Gastrocnemius medialis (tissue), 4 donors: ENCODE measurements at regions of chr12 and their contacts with region 1.

Region 1: GRCh38 chr12:123457980-123458783 is at the start of gene SNRNP35:
- DNase-seq: peak; percentile 48 to 71
- ATAC-seq: peak; percentile 86
- H3K4me3 ChIP-seq: peak within 1 kb of the TSS; percentile 63 to 98 (median 89)
- H3K27ac ChIP-seq: peak within 1 kb of the TSS; percentile 86 to 99 (median 98)
- H3K4me1 ChIP-seq: peaks cover 8 to 12% of the 10 kb centered on the region in 2 donors
- H3K27me3 ChIP-seq: no peaks in the 10 kb centered on the region
- CTCF ChIP-seq: no peak
- POLR2A ChIP-seq: peak; percentile 51 to 55
- total RNA-seq, gene SNRNP35: 22.6 to 40.4 (median 23.5) TPM

Region 2: DNA sequence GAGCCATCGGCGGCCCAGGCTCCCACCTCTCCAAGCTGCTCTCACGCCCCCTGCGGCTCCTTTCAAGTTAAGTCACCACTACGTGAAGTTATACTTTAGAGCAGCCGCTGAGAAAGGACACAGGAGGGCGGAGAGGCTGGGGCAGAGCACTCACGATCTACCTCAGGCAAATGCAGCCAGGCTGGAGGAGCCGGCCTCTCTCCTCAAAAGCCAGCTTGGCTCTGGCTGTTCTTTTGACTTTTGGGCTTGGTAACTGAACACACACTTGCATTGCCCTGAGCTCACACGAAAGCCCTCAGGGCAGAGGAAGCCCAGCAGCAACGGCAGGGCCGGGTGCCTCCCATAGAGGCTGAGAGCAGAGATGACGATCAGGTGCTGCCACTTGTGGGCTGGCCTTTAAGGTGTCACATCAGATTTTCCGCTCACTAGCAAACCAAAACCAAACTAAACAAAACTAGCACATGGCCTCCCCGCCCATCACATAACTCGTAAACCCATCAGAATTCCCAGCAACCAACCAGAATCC is 382.5 kb before region 1 on chr12:
- in situ Hi-C with region 1: no loop called
- intact Hi-C with region 1: no loop called
- DNase-seq: no peak
- ATAC-seq: no peak
- H3K4me3 ChIP-seq: no peak overlapping the region
- H3K27ac ChIP-seq: peak overlapping the region in 1 of 4 donors; percentile 62
- H3K4me1 ChIP-seq: peaks cover 43% of the 10 kb centered on the region in 2 donors
- H3K27me3 ChIP-seq: no peaks in the 10 kb centered on the region
- CTCF ChIP-seq: no peak
- POLR2A ChIP-seq: no peak

Region 3: GRCh38 chr12:123253658-123254459 is 204.3 kb before region 1 on chr12:
- in situ Hi-C with region 1: no loop called
- intact Hi-C with region 1: no loop called
- DNase-seq: peak in 1 of 2 donors; percentile 41
- ATAC-seq: peak; percentile 38 to 51
- H3K4me3 ChIP-seq: no peak overlapping the region
- H3K27ac ChIP-seq: peak overlapping the region; percentile 11 to 59 (median 48)
- H3K4me1 ChIP-seq: peaks cover 34 to 42% of the 10 kb centered on the region in 2 donors
- H3K27me3 ChIP-seq: no peaks in the 10 kb centered on the region
- CTCF ChIP-seq: no peak
- POLR2A ChIP-seq: no peak

Region 4: GRCh38 chr12:123436017-123436964 is 21.9 kb before region 1 on chr12 and contains the start of gene RILPL2:
- in situ Hi-C with region 1: no loop called
- intact Hi-C with region 1: loop called (anchors 2 kb)
- DNase-seq: peak; percentile 68 to 77
- ATAC-seq: peak; percentile 92 to 96
- H3K4me3 ChIP-seq: peak within 1 kb of the TSS; percentile 79 to 96 (median 94)
- H3K27ac ChIP-seq: peak within 1 kb of the TSS; percentile 66 to 75 (median 69)
- H3K4me1 ChIP-seq: peaks cover 10 to 14% of the 10 kb centered on the region in 2 donors
- H3K27me3 ChIP-seq: no peaks in the 10 kb centered on the region
- CTCF ChIP-seq: peak in 2 of 5 experiments; percentile 6 to 32
- POLR2A ChIP-seq: peak; percentile 43 to 44
- total RNA-seq, gene RILPL2: 1.2 to 2.0 (median 1.7) TPM